ENCODE measurements at regions of chr5 and their contacts with region 1.

Region 1: GRCh38 chr5:122515709-122516431 is 203.8 kb downstream of the SNCAIP start:
- DNase-seq: peak; percentile 56
- ATAC-seq: peak; percentile 100
- H3K4me3 ChIP-seq: peak overlapping the region in 2 of 3 experiments; percentile 25 to 32; a peak in 4 of 6 replicates
- H3K27ac ChIP-seq: no peak overlapping the region
- H3K4me1 ChIP-seq: peaks cover 5% of the 10 kb centered on the region; the same call in 1 of the 2 replicates
- H3K27me3 ChIP-seq: no peaks in the 10 kb centered on the region
- CTCF ChIP-seq: peak; percentile 85
- EP300 ChIP-seq: no peak
- POLR2A ChIP-seq: no peak
- RAD21 ChIP-seq: peak; percentile 84

Region 2: GRCh38 chr5:123089914-123090670 is 574.2 kb after region 1 on chr5:
- CTCF ChIA-PET with region 1: no interaction called
- POLR2A ChIA-PET with region 1: no interaction called
- in situ Hi-C with region 1: no loop called
- intact Hi-C with region 1: loop called (anchors 5 kb)
- DNase-seq: no peak
- ATAC-seq: peak; percentile 52
- H3K4me3 ChIP-seq: peak overlapping the region; percentile 38 to 72 (median 50)
- H3K27ac ChIP-seq: no peak overlapping the region
- H3K4me1 ChIP-seq: peaks cover 18% of the 10 kb centered on the region
- H3K27me3 ChIP-seq: peaks cover 7 to 85% of the 10 kb centered on the region in 2 experiments; a peak in 4 of 5 replicates
- CTCF ChIP-seq: no peak
- EP300 ChIP-seq: no peak
- POLR2A ChIP-seq: no peak
- RAD21 ChIP-seq: no peak

Region 3: DNA sequence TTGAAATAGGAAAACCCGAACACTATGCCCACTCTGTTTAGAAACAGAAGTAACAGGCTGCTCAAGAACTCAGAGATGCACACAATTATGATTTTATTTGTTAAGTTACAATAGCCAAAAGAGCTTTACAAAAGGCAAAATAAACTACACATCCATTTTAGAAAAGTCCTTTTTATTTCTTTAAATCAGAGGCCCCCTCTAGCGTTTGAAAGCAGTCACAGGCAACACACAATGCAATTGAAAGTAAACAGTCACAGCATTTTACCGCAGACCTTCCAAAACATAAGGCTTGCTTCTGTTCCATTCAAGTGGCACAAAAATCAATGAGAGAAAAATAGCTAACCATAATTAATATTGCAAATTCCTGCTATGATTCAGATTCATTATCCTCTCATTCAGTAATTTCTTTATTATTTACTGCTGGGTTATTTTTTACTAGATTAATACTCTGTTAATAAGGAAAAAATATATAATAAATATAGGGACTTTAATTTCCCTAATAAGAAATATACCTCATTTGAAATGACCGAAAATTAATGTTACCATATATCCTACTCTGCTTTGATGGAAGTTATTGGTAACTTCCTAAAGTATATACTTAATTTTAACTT is 829.1 kb after region 1 on chr5:
- CTCF ChIA-PET with region 1: interaction called, 3 read pairs
- POLR2A ChIA-PET with region 1: no interaction called
- in situ Hi-C with region 1: no loop called
- intact Hi-C with region 1: loop called (anchors 1 kb)
- DNase-seq: peak; percentile 15
- ATAC-seq: peak; percentile 43; the same call in 2 of the 3 replicates
- H3K4me3 ChIP-seq: no peak overlapping the region
- H3K27ac ChIP-seq: no peak overlapping the region
- H3K4me1 ChIP-seq: no peaks in the 10 kb centered on the region
- H3K27me3 ChIP-seq: no peaks in the 10 kb centered on the region
- CTCF ChIP-seq: peak; percentile 57
- EP300 ChIP-seq: no peak
- POLR2A ChIP-seq: no peak
- RAD21 ChIP-seq: no peak

Region 4: GRCh38 chr5:123423278-123424149 is 907.6 kb after region 1 on chr5 and contains the start of gene CEP120:
- CTCF ChIA-PET with region 1: no interaction called
- POLR2A ChIA-PET with region 1: no interaction called
- in situ Hi-C with region 1: no loop called
- intact Hi-C with region 1: loop called (anchors 1 kb)
- DNase-seq: peak; percentile 98
- ATAC-seq: peak; percentile 100
- H3K4me3 ChIP-seq: peak within 1 kb of the TSS; percentile 66 to 85 (median 82)
- H3K27ac ChIP-seq: peak within 1 kb of the TSS; percentile 79
- H3K4me1 ChIP-seq: peaks cover 22% of the 10 kb centered on the region
- H3K27me3 ChIP-seq: no peaks in the 10 kb centered on the region
- CTCF ChIP-seq: peak; percentile 98
- EP300 ChIP-seq: peak in 1 of 2 experiments; percentile 42; a peak in 1 of 4 replicates
- POLR2A ChIP-seq: peak; percentile 76 to 93
- RAD21 ChIP-seq: peak; percentile 48; the same call in 1 of the 2 replicates
- total RNA-seq, gene CEP120: 14.7 and 21.7 TPM in 2 replicates

Measured in HepG2 (cell line).